Activated naive CD8-positive, alpha-beta T cell treated with anti-CD3 and anti-CD28 coated beads, Interleukin-2, amount 10 ng/mL, durations not matched to agents 7 days and 5 days (primary cell): ENCODE measurements at regions of chr18 and their contacts with region 1.

Region 1: DNA sequence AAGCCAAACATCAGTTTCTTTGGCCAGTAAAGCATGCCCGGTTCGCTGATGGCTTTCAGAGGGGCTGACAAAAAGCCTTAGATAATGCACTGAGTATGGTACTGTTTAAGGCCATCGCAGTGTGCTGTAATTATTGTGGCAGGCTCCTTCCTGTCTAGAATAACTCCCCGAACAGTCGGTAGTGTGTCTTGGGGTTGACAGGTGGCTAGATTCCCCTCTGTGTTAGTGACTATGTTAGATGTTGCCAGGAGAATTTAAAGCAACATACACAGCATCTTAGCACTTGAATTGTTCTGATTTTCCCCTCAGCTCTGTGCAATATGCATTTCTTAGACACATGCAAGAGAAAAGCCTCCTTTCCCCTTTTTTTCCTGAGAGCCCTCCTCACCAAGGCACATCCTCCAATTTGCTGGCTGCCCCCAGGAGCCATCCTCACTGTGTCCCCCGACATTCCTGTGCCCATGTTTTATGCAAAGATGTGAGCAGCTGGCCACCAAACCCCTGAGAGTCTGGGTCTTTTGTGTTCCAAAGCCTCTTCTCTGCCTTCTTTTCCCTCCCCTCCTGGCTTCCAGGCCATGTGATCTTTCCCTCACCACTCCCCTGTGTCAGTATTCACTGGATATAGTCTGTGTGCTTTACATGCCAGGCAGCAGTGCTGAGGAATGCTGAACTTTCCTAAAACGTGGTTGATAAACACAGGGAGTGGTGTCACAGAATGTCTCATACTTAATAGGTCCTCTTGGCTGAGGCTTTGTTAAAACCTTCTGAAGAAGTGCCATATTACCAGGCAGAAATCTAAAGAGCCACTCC is 331.5 kb downstream of the HRH4 start:
- DNase-seq: no peak
- ATAC-seq: no peak
- H3K4me3 Mint-ChIP-seq: no peak overlapping the region
- H3K27ac Mint-ChIP-seq: no peak overlapping the region
- H3K4me1 Mint-ChIP-seq: no peaks in the 10 kb centered on the region
- H3K27me3 Mint-ChIP-seq: peaks cover 3% of the 10 kb centered on the region

Region 2: DNA sequence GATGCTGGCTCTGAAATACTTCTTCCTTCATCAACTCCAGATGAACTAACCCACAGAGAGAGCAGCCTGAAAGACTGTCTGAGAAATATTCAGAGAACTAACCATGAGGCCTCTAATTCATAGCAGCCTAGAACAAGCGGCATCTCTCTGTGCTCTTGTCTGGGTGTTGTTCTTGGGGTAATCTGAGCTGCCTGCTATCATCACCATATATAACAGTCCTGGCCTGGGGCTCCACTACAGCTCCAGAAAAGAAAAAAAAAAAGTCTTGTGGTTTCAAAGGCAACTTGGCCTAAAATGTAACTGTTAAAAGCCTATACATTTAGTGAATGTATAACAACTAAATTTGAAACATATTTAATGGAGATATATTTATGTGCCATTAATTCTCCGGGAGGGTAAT is 37.4 kb before region 1 on chr18:
- POLR2A ChIA-PET with region 1: interaction called, 10 read pairs
- DNase-seq: no peak
- ATAC-seq: no peak
- H3K4me3 Mint-ChIP-seq: no peak overlapping the region
- H3K27ac Mint-ChIP-seq: no peak overlapping the region
- H3K4me1 Mint-ChIP-seq: no peaks in the 10 kb centered on the region
- H3K27me3 Mint-ChIP-seq: peaks cover 3% of the 10 kb centered on the region